HEK293 (cell line): ENCODE measurements at regions of chr19 and their contacts with region 1.

Region 1: DNA sequence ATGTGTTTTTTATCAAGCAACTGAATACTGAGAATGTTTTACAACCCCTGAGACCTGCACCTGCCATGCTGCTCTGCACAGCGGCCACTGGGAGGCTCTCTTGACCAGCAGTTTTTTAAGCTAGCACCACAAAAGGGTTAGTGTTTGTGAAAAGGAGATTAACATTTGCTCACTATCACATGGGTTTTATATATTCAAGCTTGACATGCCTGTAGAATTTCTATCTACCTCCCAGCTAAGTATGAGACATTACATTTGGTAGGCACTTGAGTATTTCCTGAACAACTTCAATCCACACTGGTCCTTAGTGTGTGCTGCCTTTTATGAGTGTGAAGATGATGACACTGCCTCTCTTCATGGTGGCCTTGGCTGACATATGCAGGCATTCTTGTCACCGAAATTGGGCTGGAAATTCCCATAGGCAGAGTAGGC is 1238.9 kb downstream of the UQCRFS1 start:
- H3K4me3 ChIP-seq: no peak overlapping the region
- H3K27ac ChIP-seq: no peak overlapping the region
- H3K4me1 ChIP-seq: peaks cover 16% of the 10 kb centered on the region
- CTCF ChIP-seq: peak; percentile 82

Region 2: GRCh38 chr19:27851002-27851481 is 123.1 kb before region 1 on chr19:
- CTCF ChIA-PET with region 1: no interaction called
- POLR2A ChIA-PET with region 1: no interaction called
- H3K4me3 ChIP-seq: no peak overlapping the region
- H3K27ac ChIP-seq: no peak overlapping the region
- H3K4me1 ChIP-seq: no peaks in the 10 kb centered on the region
- CTCF ChIP-seq: no peak

Region 3: GRCh38 chr19:27925202-27925601 is 48.9 kb before region 1 on chr19:
- CTCF ChIA-PET with region 1: no interaction called
- POLR2A ChIA-PET with region 1: no interaction called
- H3K4me3 ChIP-seq: no peak overlapping the region
- H3K27ac ChIP-seq: no peak overlapping the region
- H3K4me1 ChIP-seq: peaks cover 21% of the 10 kb centered on the region
- CTCF ChIP-seq: no peak

Region 4: DNA sequence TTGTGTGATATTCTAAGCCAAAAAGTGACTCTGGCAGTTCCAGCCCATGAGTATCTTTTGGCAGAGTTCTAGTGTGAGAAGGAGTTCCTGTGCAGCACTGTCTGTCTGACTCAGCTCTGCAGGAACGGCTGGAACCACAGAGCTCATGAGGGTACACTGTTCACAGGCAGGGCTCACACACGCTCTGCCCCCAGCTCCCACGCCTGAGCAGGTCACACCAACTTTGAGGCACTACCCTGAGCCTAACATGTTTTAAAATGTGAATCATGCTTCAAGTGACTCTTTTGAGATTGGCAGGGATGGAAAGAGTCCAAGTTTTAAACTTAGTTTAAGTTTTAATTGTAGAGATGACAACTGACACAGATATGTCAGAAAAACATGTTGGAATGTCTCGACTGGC is 35.6 kb after region 1 on chr19:
- CTCF ChIA-PET with region 1: interaction called, 13 read pairs
- POLR2A ChIA-PET with region 1: no interaction called
- H3K4me3 ChIP-seq: no peak overlapping the region
- H3K27ac ChIP-seq: no peak overlapping the region
- H3K4me1 ChIP-seq: peaks cover 11% of the 10 kb centered on the region; the same call in 1 of the 2 replicates
- CTCF ChIP-seq: no peak

Region 5: DNA sequence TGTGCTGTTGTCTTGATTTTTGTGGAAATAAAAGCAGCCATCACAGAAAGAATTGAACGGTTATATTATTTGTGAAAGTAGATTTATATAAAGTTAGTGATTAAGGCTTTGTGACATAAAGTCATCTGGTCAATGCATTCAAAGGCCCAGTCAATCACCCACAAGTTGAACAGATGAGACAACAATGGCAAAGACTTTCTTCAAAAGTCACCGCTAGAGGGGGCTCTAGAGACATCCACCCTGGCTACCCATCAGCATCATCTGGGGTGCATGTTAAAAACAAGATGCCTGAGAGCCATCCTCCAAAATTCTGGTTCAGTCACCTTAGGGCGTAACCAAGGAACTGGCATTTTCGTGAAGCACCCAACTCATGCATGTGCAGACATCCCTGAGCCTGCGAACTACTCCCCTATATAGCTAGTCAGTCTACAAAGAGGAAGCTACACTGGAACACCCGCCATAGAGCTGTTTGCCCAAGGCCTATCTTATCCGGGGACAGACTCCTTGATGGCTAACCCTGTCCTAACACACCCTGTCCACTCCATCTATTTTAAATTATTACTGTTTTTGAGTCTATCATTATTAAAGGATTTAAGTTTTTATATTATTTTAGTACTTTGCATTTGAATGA is 268.3 kb after region 1 on chr19:
- CTCF ChIA-PET with region 1: interaction called, 83 read pairs
- POLR2A ChIA-PET with region 1: no interaction called
- H3K4me3 ChIP-seq: no peak overlapping the region
- H3K27ac ChIP-seq: no peak overlapping the region
- H3K4me1 ChIP-seq: no peaks in the 10 kb centered on the region
- CTCF ChIP-seq: peak; percentile 71

Region 6: DNA sequence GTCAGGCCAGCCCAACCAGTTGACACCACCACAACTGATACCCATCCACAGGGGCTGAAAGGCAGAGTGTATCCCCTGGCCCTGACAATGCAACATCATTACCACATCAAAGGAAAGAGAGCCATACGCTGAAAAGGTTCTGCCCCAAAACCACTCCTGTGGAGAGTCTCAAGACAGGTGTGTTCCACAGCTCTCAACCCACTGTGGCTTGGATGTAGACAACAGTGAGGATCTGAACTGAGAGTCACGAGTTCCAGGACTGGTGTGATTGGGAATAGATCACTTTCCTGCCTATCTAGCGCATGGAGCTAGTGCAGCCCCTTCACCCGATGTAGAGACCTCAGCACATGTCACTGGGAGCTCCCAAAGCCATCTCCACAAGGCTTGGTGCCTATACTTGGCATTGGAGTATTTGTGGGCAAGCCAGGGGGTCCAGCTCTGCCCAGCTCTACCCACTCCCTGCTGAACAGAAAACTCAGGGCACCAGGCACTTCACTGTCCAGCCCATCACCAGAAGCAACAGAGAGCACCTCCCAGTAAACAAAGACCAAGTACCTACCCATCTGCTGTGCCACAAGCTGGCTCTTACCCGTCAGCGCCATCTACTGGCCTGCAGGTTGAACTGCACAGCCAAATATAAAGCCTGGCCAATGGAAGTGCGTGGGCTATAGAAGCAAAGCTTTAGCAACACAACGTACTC is 659.4 kb after region 1 on chr19:
- CTCF ChIA-PET with region 1: interaction called, 31 read pairs
- POLR2A ChIA-PET with region 1: no interaction called
- H3K4me3 ChIP-seq: no peak overlapping the region
- H3K27ac ChIP-seq: no peak overlapping the region
- H3K4me1 ChIP-seq: peaks cover 17% of the 10 kb centered on the region
- CTCF ChIP-seq: peak; percentile 98

Region 7: DNA sequence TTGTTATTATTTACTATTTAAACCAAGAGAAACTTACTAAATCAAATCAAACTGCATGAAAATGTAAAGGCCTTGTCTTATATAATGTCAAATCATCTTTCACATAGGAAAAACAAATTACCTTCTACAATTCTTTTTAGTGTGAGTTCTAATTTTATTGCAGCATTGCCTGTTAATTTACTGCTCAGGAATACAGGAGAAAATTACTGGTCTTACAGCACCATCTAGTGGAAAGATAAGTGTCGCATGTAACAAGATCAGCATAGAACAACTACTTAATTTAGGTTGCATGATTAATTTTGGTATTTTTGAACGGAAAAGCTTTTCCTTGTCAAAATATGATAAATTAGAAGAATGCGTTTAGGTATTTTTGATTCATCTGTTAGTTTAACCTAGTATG is 736.2 kb after region 1 on chr19:
- CTCF ChIA-PET with region 1: interaction called, 32 read pairs
- POLR2A ChIA-PET with region 1: no interaction called
- H3K4me3 ChIP-seq: no peak overlapping the region
- H3K27ac ChIP-seq: no peak overlapping the region
- H3K4me1 ChIP-seq: peaks cover 8% of the 10 kb centered on the region; the same call in 1 of the 2 replicates
- CTCF ChIP-seq: peak; percentile 77